ENCODE measurements at regions of chr10 and their contacts with region 1.

Region 1: GRCh38 chr10:114304017-114304570 is 65.0 kb downstream of the VWA2 start:
- DNase-seq: peak; percentile 80
- H3K4me3 ChIP-seq: peak overlapping the region; percentile 20
- CTCF ChIP-seq: peak; percentile 81

Region 2: GRCh38 chr10:114520453-114520852 is 216.4 kb after region 1 on chr10:
- in situ Hi-C with region 1: no loop called
- DNase-seq: no peak
- H3K4me3 ChIP-seq: no peak overlapping the region
- CTCF ChIP-seq: no peak

Region 3: DNA sequence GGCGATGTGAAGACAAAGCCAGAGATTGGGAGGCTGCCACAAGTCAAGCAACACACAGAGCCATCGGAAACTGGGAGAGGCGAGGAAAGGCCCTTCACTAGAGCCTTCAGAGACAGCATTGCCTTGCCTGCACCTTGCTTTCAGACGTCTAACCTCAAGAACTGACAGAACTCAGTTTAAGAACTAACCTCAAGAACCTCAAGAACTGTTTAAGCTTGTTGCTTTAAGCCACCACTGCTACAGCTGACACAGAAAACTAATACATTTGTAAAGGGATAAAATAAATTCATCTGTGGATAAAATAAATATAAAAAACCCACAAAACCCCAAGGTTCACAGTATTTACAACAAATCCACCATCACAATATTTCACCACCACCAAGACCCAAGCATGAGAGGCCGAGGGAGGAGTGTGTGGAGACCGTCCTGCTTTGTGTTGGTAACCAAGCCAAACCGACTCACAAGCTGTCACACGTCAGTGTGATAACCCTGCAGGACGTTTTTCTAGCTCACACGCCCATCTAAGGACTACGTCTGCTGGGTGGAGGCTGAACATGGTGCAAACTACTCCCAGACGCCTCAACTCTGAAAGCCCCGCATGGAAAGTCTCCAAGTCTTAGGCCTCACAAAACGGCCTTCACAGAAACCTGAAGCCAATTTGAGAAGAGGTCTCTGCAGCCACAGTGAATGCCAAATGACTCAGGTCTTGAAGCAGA is 237.1 kb after region 1 on chr10:
- in situ Hi-C with region 1: loop called (anchors 5 kb)
- DNase-seq: peak; percentile 76
- H3K4me3 ChIP-seq: no peak overlapping the region
- CTCF ChIP-seq: no peak

Measured in astrocyte of the cerebellum (primary cell).